Activated naive CD4-positive, alpha-beta T cell treated with anti-CD3 and anti-CD28 coated beads for 36 hours (primary cell): ENCODE measurements at regions of chr6 and their contacts with region 1.

Region 1: DNA sequence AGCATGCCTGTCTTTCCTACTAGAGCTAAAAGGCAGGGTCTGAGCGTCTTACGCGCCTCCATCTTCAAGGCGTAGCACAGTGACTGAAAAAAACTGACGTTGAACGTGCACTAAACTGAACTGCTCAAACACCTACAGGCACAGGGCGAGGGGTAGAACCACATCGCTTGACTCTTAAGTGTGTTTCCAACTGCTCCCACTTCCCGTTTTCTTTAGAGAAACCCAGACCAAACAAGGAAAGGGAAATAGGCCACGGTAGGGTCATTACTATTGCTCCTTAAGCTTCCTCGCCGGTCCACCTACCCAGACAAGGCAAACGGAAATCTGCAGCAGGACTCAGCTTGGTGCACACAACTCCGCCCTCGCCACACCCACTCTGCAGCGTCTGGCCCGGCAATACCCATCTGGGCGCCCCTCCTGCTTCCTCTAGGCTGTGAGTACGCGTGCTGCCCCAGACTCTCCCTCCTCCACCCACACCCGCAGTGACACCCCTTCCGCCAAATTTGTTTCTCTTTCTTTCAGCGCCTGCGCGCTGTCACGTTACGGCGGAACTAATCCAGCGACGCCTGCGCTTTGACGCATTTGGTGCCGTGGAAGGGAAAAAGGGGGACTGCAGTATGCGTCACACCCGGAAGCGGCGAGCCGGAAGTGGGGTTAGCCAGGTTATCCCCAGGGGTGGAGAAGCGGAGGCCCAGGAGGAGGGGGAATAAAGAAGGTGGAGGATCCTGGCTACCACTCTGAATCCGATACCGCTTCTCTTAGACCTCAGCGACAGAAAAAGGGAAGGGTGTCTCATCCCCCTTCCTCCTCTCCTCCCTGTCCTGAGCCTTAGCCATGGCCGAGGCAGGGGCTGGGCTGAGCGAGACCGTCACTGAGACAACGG is at the start of gene PPP1R11:
- DNase-seq: peak; percentile 99
- H3K4me3 Mint-ChIP-seq: peak within 1 kb of the TSS; percentile 90
- H3K27ac Mint-ChIP-seq: peak within 1 kb of the TSS; percentile 96
- H3K4me1 Mint-ChIP-seq: peaks cover 48% of the 10 kb centered on the region
- H3K27me3 Mint-ChIP-seq: peaks cover 7% of the 10 kb centered on the region
- total RNA-seq, gene PPP1R11: 42.8 to 46.6 TPM

Region 2: GRCh38 chr6:28266962-28267694 is 1799.7 kb before region 1 on chr6 and contains the start of gene ZSCAN26:
- CTCF ChIA-PET with region 1: no interaction called
- intact Hi-C with region 1: loop called (anchors 10 kb)
- DNase-seq: peak; percentile 87
- H3K4me3 Mint-ChIP-seq: no peak within 1 kb of the TSS
- H3K27ac Mint-ChIP-seq: no peak within 1 kb of the TSS
- H3K4me1 Mint-ChIP-seq: peaks cover 43% of the 10 kb centered on the region
- H3K27me3 Mint-ChIP-seq: no peaks in the 10 kb centered on the region
- total RNA-seq, gene ZSCAN26: 2.7 to 3.8 TPM

Region 3: GRCh38 chr6:29926413-29927274 is 140.2 kb before region 1 on chr6:
- CTCF ChIA-PET with region 1: no interaction called
- intact Hi-C with region 1: loop called (anchors 5 kb)
- DNase-seq: peak; percentile 90
- H3K4me3 Mint-ChIP-seq: peak overlapping the region; percentile 96
- H3K27ac Mint-ChIP-seq: peak overlapping the region; percentile 94
- H3K4me1 Mint-ChIP-seq: peaks cover 31% of the 10 kb centered on the region
- H3K27me3 Mint-ChIP-seq: no peaks in the 10 kb centered on the region

Region 4: DNA sequence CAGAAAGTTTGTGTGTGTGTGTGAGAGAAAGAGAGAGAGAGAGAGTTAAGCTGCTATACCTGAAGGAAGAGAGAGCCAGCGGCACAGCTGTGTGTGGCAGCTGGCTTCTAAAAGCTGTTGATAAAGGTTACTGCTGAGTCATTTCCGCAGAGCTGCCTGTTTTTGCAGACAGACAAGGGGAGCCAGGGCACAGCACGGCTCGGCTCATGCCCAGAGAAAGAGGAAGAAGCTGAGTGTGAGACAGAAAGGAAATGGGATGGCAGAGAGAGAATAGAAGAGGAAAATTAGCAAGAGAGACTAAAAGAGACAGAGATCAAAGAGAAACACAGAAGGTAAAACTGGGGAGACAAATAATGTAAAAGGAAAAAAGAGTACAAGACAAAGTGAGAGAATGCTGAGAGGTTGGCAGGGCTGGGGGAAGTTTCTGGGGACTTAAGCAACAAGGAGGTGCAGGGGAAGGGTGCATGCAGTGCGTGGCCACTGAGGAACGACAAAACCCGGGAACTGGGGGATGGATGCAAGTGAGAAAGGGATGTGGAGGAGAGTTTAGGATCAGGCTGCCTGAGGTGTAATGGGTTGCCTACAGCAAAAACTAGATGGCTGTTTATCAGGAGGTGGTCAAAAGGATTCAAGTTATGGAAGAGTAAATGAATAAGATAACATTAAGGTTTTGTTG is 101.8 kb before region 1 on chr6:
- CTCF ChIA-PET with region 1: no interaction called
- intact Hi-C with region 1: loop called (anchors 1 kb)
- DNase-seq: peak; percentile 91
- H3K4me3 Mint-ChIP-seq: peak overlapping the region; percentile 86
- H3K27ac Mint-ChIP-seq: peak overlapping the region; percentile 98
- H3K4me1 Mint-ChIP-seq: peaks cover 41% of the 10 kb centered on the region
- H3K27me3 Mint-ChIP-seq: no peaks in the 10 kb centered on the region

Region 5: DNA sequence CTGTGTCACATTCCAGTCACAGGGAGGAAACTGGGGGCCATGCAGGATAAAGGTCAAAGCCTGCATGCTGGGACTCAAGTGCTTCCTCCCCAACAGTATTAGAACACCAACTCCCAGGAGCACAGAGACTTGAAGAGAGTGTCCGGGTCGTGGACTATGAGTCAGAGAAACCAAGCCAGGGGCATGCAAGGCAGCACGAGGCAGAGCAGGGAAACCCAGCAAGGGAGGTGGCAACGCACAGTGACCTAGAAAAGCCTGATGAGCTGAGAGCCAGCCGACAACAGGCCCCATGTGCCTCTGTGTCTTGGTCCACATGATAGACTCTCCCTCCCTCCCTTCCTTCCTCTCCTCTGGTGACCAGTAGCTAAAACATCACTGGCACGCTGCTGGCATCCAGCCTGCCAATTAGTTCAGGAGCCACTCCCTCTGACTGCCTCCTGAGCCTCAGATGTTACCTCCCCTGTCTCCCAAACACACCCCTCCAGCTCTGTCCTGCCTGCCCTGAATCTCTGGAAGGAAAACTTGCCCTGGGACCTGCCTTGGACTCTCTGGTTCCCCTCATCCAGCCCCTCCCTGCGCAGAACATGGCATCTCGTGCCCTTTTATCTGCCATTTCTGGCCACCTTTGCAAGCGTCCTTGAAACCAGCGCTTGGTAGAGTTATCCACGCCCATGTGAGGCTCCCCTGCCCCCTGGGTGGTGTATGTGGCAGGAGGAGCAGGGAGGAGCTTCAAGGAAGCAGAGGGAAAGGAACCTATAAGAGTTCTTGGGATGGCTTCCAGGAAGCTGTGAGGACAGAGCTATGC is 25.0 kb after region 1 on chr6:
- CTCF ChIA-PET with region 1: no interaction called
- intact Hi-C with region 1: no loop called
- DNase-seq: no peak
- H3K4me3 Mint-ChIP-seq: no peak overlapping the region
- H3K27ac Mint-ChIP-seq: no peak overlapping the region
- H3K4me1 Mint-ChIP-seq: no peaks in the 10 kb centered on the region
- H3K27me3 Mint-ChIP-seq: peaks cover 9% of the 10 kb centered on the region

Region 6: GRCh38 chr6:30130887-30131862 is 64.4 kb after region 1 on chr6:
- CTCF ChIA-PET with region 1: interaction called, 15 read pairs
- intact Hi-C with region 1: loop called (anchors 2 kb)
- DNase-seq: peak; percentile 80
- H3K4me3 Mint-ChIP-seq: no peak overlapping the region
- H3K27ac Mint-ChIP-seq: no peak overlapping the region
- H3K4me1 Mint-ChIP-seq: peaks cover 15% of the 10 kb centered on the region
- H3K27me3 Mint-ChIP-seq: peaks cover 51% of the 10 kb centered on the region

Region 7: DNA sequence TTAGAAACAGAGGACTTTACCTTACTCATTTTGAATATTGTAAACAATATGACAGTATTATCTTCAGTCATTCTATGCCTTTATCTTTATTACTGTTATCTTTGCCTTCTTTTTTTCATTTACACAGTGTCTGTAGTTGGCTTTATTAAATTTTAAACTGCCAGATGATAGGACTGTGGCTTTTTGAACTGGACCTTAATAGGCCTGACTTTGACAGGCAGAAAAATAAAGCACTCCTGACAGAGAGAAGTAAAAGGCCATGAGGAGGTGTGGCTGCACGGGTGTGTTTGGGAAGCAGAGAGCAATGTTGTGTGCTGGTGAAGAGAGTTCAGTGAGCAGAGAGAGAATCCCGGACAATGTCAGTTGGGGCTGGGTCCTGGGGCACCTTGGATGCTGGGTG is 77.0 kb after region 1 on chr6:
- CTCF ChIA-PET with region 1: no interaction called
- intact Hi-C with region 1: no loop called
- DNase-seq: no peak
- H3K4me3 Mint-ChIP-seq: no peak overlapping the region
- H3K27ac Mint-ChIP-seq: no peak overlapping the region
- H3K4me1 Mint-ChIP-seq: no peaks in the 10 kb centered on the region
- H3K27me3 Mint-ChIP-seq: peaks cover 41% of the 10 kb centered on the region

Region 8: DNA sequence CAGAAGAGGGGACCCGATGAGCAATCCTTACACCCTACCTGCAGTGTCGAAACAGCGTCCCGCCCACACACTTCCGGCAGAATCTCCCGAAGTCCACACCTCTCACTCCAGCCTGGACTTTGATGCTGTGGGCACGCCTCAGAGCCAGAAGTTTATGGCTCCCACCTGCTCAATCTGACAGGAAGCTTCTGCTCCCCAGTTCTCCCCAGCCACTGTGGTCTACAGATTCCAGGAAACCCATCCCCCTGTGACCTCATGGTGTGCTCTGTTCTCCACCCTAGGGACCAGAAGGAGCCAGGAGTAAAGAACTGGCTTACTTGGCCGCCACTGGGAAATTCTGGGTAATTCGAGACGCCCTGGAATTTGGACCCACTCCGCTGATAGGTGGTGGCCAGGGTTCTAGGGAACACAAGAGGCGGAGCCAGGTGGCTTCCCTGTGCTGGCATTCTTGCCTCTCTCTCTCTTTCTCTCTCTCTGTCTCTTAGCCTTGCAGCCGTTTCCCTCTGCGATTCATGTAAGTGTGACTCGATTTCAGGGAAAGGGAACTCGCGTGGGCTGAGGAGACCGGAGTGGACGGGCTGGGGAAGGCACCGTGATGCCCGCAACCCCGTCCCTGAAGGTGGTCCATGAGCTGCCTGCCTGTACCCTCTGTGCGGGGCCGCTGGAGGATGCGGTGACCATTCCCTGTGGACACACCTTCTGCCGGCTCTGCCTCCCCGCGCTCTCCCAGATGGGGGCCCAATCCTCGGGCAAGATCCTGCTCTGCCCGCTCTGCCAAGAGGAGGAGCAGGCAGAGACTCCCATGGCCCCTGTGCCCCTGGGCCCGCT is 96.5 kb after region 1 on chr6 and contains the start of gene TRIM15:
- CTCF ChIA-PET with region 1: no interaction called
- intact Hi-C with region 1: no loop called
- DNase-seq: peak; percentile 86
- H3K4me3 Mint-ChIP-seq: peak within 1 kb of the TSS; percentile 11
- H3K27ac Mint-ChIP-seq: peak within 1 kb of the TSS; percentile 9
- H3K4me1 Mint-ChIP-seq: peaks cover 47% of the 10 kb centered on the region
- H3K27me3 Mint-ChIP-seq: peaks cover 20% of the 10 kb centered on the region
- total RNA-seq, gene TRIM15: 0.79 to 2.2 TPM

Region 9: DNA sequence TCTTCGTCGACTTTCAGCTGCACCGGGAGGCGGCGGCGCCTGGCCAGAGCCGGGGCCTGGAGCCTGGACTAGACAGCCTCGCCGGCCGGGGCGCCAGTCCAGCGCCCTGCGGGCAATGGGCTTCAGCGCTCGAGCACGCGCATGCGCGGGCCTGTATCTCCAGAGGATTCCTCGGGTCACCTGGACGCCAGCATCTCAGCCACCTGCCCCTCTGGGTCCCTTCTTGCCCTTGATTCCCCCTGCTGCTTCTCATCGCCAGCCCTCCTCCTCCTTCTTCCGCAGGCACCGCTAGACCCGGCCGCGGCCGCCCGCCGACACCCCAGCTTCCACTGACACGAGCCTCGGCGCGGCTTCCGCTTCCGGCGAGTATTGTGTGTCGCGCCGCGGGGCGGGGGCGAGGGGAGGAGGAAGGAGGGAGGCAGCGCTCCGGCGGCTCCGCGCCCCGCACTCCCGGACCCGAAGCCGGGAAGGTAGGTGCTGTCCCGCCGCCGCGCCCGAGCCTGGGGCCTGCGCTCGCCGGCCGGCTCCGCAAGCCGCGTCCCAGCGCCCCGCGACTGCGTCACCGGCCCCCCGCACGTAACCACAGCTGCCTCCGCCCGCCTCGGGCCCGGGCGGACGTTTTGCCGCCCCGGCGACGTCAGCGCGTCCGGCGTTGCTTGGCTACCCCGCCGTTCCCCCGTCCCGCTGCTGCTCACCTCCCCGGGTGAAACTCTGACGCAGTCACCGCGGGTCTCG is 259.9 kb after region 1 on chr6 and contains the start of gene TRIM39:
- CTCF ChIA-PET with region 1: no interaction called
- intact Hi-C with region 1: loop called (anchors 2 kb)
- DNase-seq: peak; percentile 87
- H3K4me3 Mint-ChIP-seq: peak within 1 kb of the TSS; percentile 96
- H3K27ac Mint-ChIP-seq: peak within 1 kb of the TSS; percentile 97
- H3K4me1 Mint-ChIP-seq: peaks cover 49% of the 10 kb centered on the region
- H3K27me3 Mint-ChIP-seq: no peaks in the 10 kb centered on the region
- total RNA-seq, gene TRIM39: 14.2 to 14.5 TPM

Region 10: GRCh38 chr6:31769684-31770371 is 1703.0 kb after region 1 on chr6:
- CTCF ChIA-PET with region 1: no interaction called
- intact Hi-C with region 1: no loop called
- DNase-seq: peak; percentile 86
- H3K4me3 Mint-ChIP-seq: no peak overlapping the region
- H3K27ac Mint-ChIP-seq: no peak overlapping the region
- H3K4me1 Mint-ChIP-seq: peaks cover 27% of the 10 kb centered on the region
- H3K27me3 Mint-ChIP-seq: no peaks in the 10 kb centered on the region